ENCODE measurements at regions of chr15 and their contacts with region 1.

Region 1: GRCh38 chr15:66673410-66674322 is 28.4 kb upstream of the SMAD6 start:
- DNase-seq: peak; percentile 43 to 96
- H3K4me3 ChIP-seq: no peak overlapping the region
- H3K27ac ChIP-seq: peak overlapping the region; percentile 36; the same call in 1 of the 2 replicates
- H3K4me1 ChIP-seq: peaks cover 7 to 19% (median 13%) of the 10 kb centered on the region in 4 experiments
- H3K27me3 ChIP-seq: no peaks in the 10 kb centered on the region
- CTCF ChIP-seq: no peak
- EP300 ChIP-seq: no peak
- POLR2A ChIP-seq: no peak
- RAD21 ChIP-seq: no peak

Region 2: DNA sequence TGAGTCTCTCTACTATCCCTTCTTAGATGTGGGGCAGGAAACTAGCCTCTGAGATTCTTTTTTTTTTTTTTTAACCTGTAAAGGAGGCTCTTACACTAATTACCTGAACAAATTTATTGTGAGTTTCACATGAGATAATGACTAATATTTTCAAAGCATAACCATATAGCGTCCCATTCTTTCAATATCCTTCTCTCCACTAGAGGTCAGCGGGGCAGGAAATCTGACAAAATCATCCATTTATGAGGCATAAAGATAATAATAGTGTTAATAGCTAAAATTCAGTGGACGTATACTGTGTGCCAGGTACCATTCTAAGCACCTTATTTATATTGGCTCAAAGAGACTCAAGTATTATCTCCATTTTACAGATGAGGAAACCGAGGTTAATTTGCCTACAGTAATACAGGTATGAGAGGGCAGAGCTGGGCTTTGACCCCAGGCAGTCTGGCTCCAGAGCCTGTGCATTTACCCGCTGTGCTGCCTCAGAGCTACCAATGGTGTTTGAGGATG is 12.0 kb after region 1 on chr15:
- CTCF ChIA-PET with region 1: interaction called, 12 read pairs
- POLR2A ChIA-PET with region 1: no interaction called
- DNase-seq: no peak
- H3K4me3 ChIP-seq: no peak overlapping the region
- H3K27ac ChIP-seq: no peak overlapping the region
- H3K4me1 ChIP-seq: no peaks in the 10 kb centered on the region
- H3K27me3 ChIP-seq: no peaks in the 10 kb centered on the region
- CTCF ChIP-seq: peak in 1 of 3 experiments; percentile 22; a peak in 1 of 4 replicates
- EP300 ChIP-seq: no peak
- POLR2A ChIP-seq: no peak
- RAD21 ChIP-seq: peak in 1 of 2 experiments; percentile 11; a peak in 1 of 4 replicates

Measured in H1 (cell line).